ENCODE measurements at regions of chr22 and their contacts with region 1.

Region 1: DNA sequence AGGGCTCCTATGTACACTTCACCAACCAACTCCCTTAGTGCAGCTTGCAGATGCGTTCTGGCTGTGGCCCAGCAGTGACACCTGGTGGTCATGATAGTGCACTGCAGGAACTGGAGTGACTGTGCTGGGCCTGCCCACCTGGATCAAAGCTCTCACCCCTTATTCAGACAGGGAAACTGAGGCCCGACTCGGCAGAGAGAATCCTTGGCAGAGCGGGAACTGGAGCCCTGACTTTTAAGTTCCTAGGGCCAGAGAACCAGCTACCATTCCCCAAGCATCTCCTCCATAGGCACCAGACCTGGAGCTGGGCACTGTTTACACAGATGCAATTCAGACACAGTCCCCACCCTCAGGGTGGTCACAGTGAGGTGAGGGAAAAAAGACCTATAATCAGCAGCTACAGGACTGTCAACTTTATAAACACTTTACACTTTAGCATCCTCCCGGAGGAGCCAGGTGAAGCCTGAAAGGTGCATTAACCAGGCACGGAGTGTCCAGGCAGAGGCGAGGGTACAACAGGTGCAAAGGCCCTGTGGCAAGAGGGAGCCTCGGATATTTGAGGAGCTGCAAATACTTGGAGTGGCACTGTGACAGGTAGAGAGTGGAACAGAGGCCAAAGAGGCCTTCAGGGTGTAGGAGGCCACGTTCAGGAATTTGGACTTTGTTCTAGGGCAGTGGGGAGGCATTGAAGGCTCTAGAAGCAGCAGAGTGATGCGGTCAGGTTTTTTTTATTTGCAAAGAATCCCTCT is 22.0 kb downstream of the RHBDD3 start:
- DNase-seq: peak; percentile 46 to 62 (median 58)
- H3K4me3 ChIP-seq: no peak overlapping the region
- H3K4me3 Mint-ChIP-seq: no peak overlapping the region
- H3K27ac ChIP-seq: no peak overlapping the region
- H3K27ac Mint-ChIP-seq: no peak overlapping the region
- H3K4me1 ChIP-seq: no peaks in the 10 kb centered on the region
- H3K4me1 Mint-ChIP-seq: peaks cover 0 to 2% (median under 1%) of the 10 kb centered on the region in 4 donors
- H3K27me3 ChIP-seq: no peaks in the 10 kb centered on the region
- H3K27me3 Mint-ChIP-seq: peaks cover 9 to 17% of the 10 kb centered on the region in 2 donors

Region 2: DNA sequence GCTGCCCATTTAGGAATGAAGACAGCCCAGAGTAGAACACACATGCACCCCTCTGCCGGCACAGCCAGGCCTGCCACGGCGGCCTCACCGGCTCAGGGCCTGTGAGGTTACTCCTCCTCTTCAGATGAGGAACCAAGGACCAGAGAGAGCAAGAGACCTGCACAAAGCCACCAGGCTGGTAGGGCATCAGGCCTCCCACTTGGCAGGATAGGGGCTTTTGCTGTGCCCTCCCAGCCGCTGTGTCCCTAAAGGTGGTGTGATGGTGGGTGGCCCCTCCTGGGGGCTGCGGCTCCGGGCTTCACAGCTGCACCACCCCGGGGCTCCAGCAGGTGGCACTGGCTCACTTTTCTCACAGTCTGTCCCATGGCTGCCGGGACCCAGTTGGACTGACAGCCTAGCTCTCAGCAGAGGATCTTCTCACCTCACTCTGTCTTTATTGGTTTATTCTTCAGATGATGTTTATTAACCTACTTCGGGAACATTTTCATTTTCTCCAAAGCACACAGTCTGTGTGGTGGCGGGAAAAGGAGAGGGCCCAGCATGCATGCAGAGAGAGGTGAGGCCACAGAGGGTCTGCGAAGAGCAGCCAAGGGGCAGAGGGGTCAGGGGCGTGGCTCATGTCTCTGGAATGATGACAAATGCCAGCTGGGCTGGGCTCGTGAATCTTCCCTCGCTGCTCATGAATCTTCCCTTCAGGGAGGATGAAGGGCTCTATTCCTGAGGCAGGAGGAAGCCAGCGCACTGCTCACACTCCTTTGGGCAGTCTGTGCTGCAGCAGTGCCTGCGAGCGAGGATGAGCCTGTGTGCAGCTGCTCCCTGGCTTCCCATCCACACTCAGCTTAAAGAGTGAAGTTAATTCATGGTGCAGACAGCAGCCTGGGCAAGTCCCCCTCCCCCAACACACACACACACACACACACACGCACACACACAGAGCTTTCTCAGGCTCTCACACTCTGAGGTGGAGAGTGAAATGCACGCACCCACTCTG is 1225.6 kb before region 1 on chr22:
- CTCF ChIA-PET with region 1: no interaction called
- POLR2A ChIA-PET with region 1: no interaction called
- intact Hi-C with region 1: loop called (anchors 10 kb)
- DNase-seq: peak in 4 of 5 donors; percentile 39 to 50 (median 42)
- H3K4me3 ChIP-seq: no peak overlapping the region
- H3K4me3 Mint-ChIP-seq: no peak overlapping the region
- H3K27ac ChIP-seq: no peak overlapping the region
- H3K27ac Mint-ChIP-seq: no peak overlapping the region
- H3K4me1 ChIP-seq: no peaks in the 10 kb centered on the region
- H3K4me1 Mint-ChIP-seq: peaks cover 0 to 3% (median under 1%) of the 10 kb centered on the region in 4 donors
- H3K27me3 ChIP-seq: no peaks in the 10 kb centered on the region
- H3K27me3 Mint-ChIP-seq: peaks cover 0 to 3% of the 10 kb centered on the region in 2 donors

Region 3: DNA sequence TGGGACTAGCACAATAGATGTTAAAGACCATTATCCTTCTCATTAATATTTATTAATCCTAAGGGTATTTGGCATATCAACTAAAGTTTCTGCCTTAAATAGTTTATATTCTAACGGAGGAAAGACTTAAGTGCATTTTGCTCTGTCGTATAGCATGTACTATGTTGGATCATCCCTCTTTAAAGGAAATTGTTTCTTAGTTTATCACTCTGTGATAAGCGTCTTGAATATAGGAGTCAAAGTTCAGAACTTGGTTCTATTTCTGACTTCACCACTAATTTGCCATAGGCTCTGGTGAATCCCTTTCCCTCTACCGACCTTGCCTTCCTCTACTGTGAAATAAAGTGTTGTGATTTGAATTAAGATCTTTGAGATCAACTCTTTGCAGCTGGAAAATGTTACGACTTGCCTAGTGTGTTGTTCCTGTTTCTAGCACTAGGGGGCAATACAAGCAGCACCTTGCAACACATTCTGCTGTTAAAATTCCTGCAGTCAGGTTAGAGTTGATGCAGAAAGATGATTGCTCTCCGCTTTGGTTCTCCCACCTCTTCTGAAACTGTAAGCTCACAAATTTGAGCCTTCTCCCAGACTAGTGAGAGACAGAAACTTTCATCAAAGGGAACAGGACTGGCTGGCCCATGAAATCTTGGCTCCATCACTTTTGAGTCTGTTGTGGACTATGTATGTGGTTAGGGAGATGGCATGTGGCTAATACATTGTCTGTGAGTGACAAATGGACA is 390.3 kb before region 1 on chr22:
- CTCF ChIA-PET with region 1: interaction called, 9 read pairs
- POLR2A ChIA-PET with region 1: no interaction called
- intact Hi-C with region 1: loop called (anchors 1 kb)
- DNase-seq: peak; percentile 48 to 63 (median 59)
- H3K4me3 ChIP-seq: no peak overlapping the region
- H3K4me3 Mint-ChIP-seq: no peak overlapping the region
- H3K27ac ChIP-seq: no peak overlapping the region
- H3K27ac Mint-ChIP-seq: no peak overlapping the region
- H3K4me1 ChIP-seq: no peaks in the 10 kb centered on the region
- H3K4me1 Mint-ChIP-seq: peaks cover 0 to 6% (median 0%) of the 10 kb centered on the region in 4 donors
- H3K27me3 ChIP-seq: no peaks in the 10 kb centered on the region
- H3K27me3 Mint-ChIP-seq: peaks cover 0 to 2% of the 10 kb centered on the region in 2 donors

Region 4: GRCh38 chr22:29154364-29155048 is 91.3 kb before region 1 on chr22:
- CTCF ChIA-PET with region 1: interaction called, 15 read pairs
- POLR2A ChIA-PET with region 1: no interaction called
- intact Hi-C with region 1: no loop called
- DNase-seq: peak in 4 of 5 donors; percentile 33 to 53 (median 42)
- H3K4me3 ChIP-seq: no peak overlapping the region
- H3K4me3 Mint-ChIP-seq: peak overlapping the region in 3 of 8 donors; percentile 5 to 59 (median 55)
- H3K27ac ChIP-seq: no peak overlapping the region
- H3K27ac Mint-ChIP-seq: no peak overlapping the region
- H3K4me1 ChIP-seq: peaks cover 10% of the 10 kb centered on the region
- H3K4me1 Mint-ChIP-seq: peaks cover 4 to 7% (median 6%) of the 10 kb centered on the region in 4 donors
- H3K27me3 ChIP-seq: no peaks in the 10 kb centered on the region
- H3K27me3 Mint-ChIP-seq: peaks cover 9 to 22% of the 10 kb centered on the region in 2 donors

Region 5: DNA sequence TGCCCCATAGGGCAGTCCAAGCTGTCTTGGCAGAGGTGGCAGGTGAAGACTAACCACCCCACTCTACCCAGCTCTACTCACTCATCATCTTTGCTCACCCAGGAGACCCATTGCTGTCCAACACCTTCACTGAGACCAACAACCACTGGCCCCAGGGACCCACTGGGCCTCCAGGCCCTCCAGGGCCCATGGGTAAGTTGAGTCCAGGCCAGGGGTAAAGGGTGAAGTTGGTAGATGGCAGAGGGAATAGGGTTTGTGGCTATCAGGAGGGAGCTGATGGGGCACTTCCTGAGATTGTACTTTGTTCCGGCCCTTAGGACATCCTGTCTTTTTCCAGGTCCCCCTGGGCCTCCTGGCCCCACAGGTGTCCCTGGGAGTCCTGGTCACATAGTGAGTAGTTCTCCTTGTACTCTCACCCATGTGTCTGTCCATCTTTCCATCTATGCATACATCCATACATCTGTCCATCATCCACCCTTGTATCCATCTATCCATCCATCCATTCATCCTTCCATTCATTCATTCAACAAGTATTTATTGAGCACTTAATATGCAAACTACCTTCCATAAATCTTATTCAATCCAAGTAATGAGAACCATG is 12.4 kb before region 1 on chr22:
- CTCF ChIA-PET with region 1: interaction called, 17 read pairs
- POLR2A ChIA-PET with region 1: no interaction called
- intact Hi-C with region 1: no loop called
- DNase-seq: no peak
- H3K4me3 ChIP-seq: no peak overlapping the region
- H3K4me3 Mint-ChIP-seq: no peak overlapping the region
- H3K27ac ChIP-seq: no peak overlapping the region
- H3K27ac Mint-ChIP-seq: no peak overlapping the region
- H3K4me1 ChIP-seq: no peaks in the 10 kb centered on the region
- H3K4me1 Mint-ChIP-seq: no peaks in the 10 kb centered on the region
- H3K27me3 ChIP-seq: no peaks in the 10 kb centered on the region
- H3K27me3 Mint-ChIP-seq: peaks cover 0 to 3% of the 10 kb centered on the region in 2 donors

Region 6: GRCh38 chr22:29330753-29331152 is 84.9 kb after region 1 on chr22:
- CTCF ChIA-PET with region 1: no interaction called
- POLR2A ChIA-PET with region 1: no interaction called
- intact Hi-C with region 1: no loop called
- DNase-seq: no peak
- H3K4me3 ChIP-seq: no peak overlapping the region
- H3K4me3 Mint-ChIP-seq: no peak overlapping the region
- H3K27ac ChIP-seq: no peak overlapping the region
- H3K27ac Mint-ChIP-seq: no peak overlapping the region
- H3K4me1 ChIP-seq: no peaks in the 10 kb centered on the region
- H3K4me1 Mint-ChIP-seq: no peaks in the 10 kb centered on the region
- H3K27me3 ChIP-seq: no peaks in the 10 kb centered on the region
- H3K27me3 Mint-ChIP-seq: no peaks in the 10 kb centered on the region